Activated CD4-positive, alpha-beta T cell treated with anti-CD3 and anti-CD28 coated beads, Interleukin-2, amount 10 ng/mL, durations not matched to agents 24 days and 14 days (primary cell): ENCODE measurements at regions of chr10 and their contacts with region 1.

Region 1: DNA sequence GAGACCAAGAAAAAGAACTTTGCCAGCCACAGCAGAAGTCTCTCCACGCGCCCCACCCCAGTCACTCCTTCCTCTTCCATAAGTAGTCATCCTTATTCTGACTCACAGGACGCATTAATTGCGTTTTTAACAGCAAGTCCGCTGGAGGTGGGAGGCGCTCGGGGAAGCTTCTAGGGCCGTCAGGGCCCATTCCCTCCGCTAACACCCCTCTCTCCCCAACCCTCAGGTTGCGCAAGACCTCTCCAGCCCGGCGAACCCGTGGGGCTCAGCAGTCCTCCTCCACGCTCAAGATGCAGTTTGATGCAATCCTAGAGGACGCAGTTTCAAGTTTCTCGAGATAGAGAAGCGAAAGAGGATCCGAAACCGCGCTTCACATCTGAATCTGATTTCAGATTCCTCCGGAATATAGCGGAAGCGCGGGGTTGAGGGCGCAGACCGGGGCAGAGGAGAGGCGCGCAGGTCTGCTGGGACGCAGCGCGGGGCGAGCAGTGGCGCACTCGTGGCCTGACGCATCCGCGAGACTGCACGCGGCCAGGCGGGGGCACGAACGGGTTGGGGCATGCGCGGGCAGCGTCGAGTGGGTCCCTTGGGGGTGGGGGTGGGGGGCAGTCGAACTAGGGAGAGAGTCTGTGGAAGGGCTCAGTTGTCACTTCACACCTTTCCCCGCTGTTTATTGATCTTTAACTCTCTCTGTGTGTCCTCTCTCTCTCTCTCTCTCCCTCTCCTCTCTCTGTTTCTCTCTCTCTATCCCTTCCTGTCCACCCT is 37.8 kb upstream of the PSAP start:
- DNase-seq: peak; percentile 90
- H3K4me3 Mint-ChIP-seq: peak overlapping the region; percentile 88
- H3K27ac Mint-ChIP-seq: peak overlapping the region; percentile 76
- H3K4me1 Mint-ChIP-seq: peaks cover 10% of the 10 kb centered on the region
- H3K27me3 Mint-ChIP-seq: peaks cover 15% of the 10 kb centered on the region

Region 2: GRCh38 chr10:71850637-71851464 is 38.0 kb before region 1 on chr10 and contains the start of gene PSAP:
- intact Hi-C with region 1: loop called (anchors 2 kb)
- DNase-seq: peak; percentile 100
- H3K4me3 Mint-ChIP-seq: peak within 1 kb of the TSS; percentile 93
- H3K27ac Mint-ChIP-seq: peak within 1 kb of the TSS; percentile 83
- H3K4me1 Mint-ChIP-seq: peaks cover 35% of the 10 kb centered on the region
- H3K27me3 Mint-ChIP-seq: no peaks in the 10 kb centered on the region
- total RNA-seq, gene PSAP: 97.9 and 99.9 TPM in 2 replicates

Region 3: GRCh38 chr10:71933651-71934050 is 44.8 kb after region 1 on chr10:
- intact Hi-C with region 1: loop called (anchors 2 kb)
- DNase-seq: peak; percentile 84
- H3K4me3 Mint-ChIP-seq: peak overlapping the region; percentile 54
- H3K27ac Mint-ChIP-seq: peak overlapping the region; percentile 79
- H3K4me1 Mint-ChIP-seq: peaks cover 17% of the 10 kb centered on the region
- H3K27me3 Mint-ChIP-seq: peaks cover 8% of the 10 kb centered on the region